ENCODE measurements at regions of chr18 and their contacts with region 1.

Region 1: GRCh38 chr18:3129053-3129864 is 90.5 kb downstream of the MYOM1 start:
- DNase-seq: peak; percentile 89
- H3K4me3 Mint-ChIP-seq: no peak overlapping the region
- H3K27ac Mint-ChIP-seq: no peak overlapping the region
- H3K4me1 Mint-ChIP-seq: peaks cover 10% of the 10 kb centered on the region
- H3K27me3 Mint-ChIP-seq: peaks cover 3% of the 10 kb centered on the region

Region 2: GRCh38 chr18:2932247-2933181 is 196.7 kb before region 1 on chr18:
- CTCF ChIA-PET with region 1: interaction called, 18 read pairs
- DNase-seq: peak; percentile 54
- H3K4me3 Mint-ChIP-seq: no peak overlapping the region
- H3K27ac Mint-ChIP-seq: peak overlapping the region; percentile 57
- H3K4me1 Mint-ChIP-seq: peaks cover 23% of the 10 kb centered on the region
- H3K27me3 Mint-ChIP-seq: no peaks in the 10 kb centered on the region

Region 3: GRCh38 chr18:3117493-3118192 is 11.6 kb before region 1 on chr18:
- CTCF ChIA-PET with region 1: interaction called, 13 read pairs
- DNase-seq: no peak
- H3K4me3 Mint-ChIP-seq: no peak overlapping the region
- H3K27ac Mint-ChIP-seq: no peak overlapping the region
- H3K4me1 Mint-ChIP-seq: no peaks in the 10 kb centered on the region
- H3K27me3 Mint-ChIP-seq: peaks cover 4% of the 10 kb centered on the region

Region 4: GRCh38 chr18:3151399-3152264 is 22.4 kb after region 1 on chr18:
- CTCF ChIA-PET with region 1: interaction called, 19 read pairs
- DNase-seq: no peak
- H3K4me3 Mint-ChIP-seq: no peak overlapping the region
- H3K27ac Mint-ChIP-seq: no peak overlapping the region
- H3K4me1 Mint-ChIP-seq: peaks cover 6% of the 10 kb centered on the region
- H3K27me3 Mint-ChIP-seq: peaks cover 7% of the 10 kb centered on the region

Region 5: GRCh38 chr18:3511922-3512372 is 382.7 kb after region 1 on chr18:
- CTCF ChIA-PET with region 1: no interaction called
- DNase-seq: no peak
- H3K4me3 Mint-ChIP-seq: no peak overlapping the region
- H3K27ac Mint-ChIP-seq: no peak overlapping the region
- H3K4me1 Mint-ChIP-seq: no peaks in the 10 kb centered on the region
- H3K27me3 Mint-ChIP-seq: peaks cover 8% of the 10 kb centered on the region

Region 6: GRCh38 chr18:3623769-3624545 is 494.7 kb after region 1 on chr18:
- CTCF ChIA-PET with region 1: no interaction called
- DNase-seq: no peak
- H3K4me3 Mint-ChIP-seq: no peak overlapping the region
- H3K27ac Mint-ChIP-seq: peak overlapping the region; percentile 83
- H3K4me1 Mint-ChIP-seq: peaks cover 38% of the 10 kb centered on the region
- H3K27me3 Mint-ChIP-seq: no peaks in the 10 kb centered on the region

Measured in activated naive CD4-positive, alpha-beta T cell treated with anti-CD3 and anti-CD28 coated beads, Interleukin-2, amount 10 ng/mL, durations not matched to agents 7 days and 5 days (primary cell).